Endothelial cell of umbilical vein (primary cell): ENCODE measurements at regions of chr22 and their contacts with region 1.

Region 1: GRCh38 chr22:45336971-45337431 is 27.3 kb downstream of the FAM118A start:
- DNase-seq: peak; percentile 100
- H3K4me3 ChIP-seq: no peak overlapping the region
- H3K27ac ChIP-seq: peak overlapping the region; percentile 96
- H3K4me1 ChIP-seq: peaks cover 22% of the 10 kb centered on the region
- H3K27me3 ChIP-seq: no peaks in the 10 kb centered on the region
- CTCF ChIP-seq: no peak
- POLR2A ChIP-seq: no peak

Region 2: GRCh38 chr22:45268958-45269844 is 67.8 kb before region 1 on chr22:
- CTCF ChIA-PET with region 1: no interaction called
- POLR2A ChIA-PET with region 1: no interaction called
- dilution Hi-C with region 1: no loop called
- intact Hi-C with region 1: loop called (anchors 2 kb)
- DNase-seq: peak; percentile 62
- H3K4me3 ChIP-seq: peak overlapping the region; percentile 44 to 61 (median 57)
- H3K27ac ChIP-seq: no peak overlapping the region
- H3K4me1 ChIP-seq: peaks cover 6% of the 10 kb centered on the region
- H3K27me3 ChIP-seq: peaks cover 4 to 15% of the 10 kb centered on the region in 2 experiments
- CTCF ChIP-seq: peak; percentile 74 to 78
- POLR2A ChIP-seq: no peak

Region 3: DNA sequence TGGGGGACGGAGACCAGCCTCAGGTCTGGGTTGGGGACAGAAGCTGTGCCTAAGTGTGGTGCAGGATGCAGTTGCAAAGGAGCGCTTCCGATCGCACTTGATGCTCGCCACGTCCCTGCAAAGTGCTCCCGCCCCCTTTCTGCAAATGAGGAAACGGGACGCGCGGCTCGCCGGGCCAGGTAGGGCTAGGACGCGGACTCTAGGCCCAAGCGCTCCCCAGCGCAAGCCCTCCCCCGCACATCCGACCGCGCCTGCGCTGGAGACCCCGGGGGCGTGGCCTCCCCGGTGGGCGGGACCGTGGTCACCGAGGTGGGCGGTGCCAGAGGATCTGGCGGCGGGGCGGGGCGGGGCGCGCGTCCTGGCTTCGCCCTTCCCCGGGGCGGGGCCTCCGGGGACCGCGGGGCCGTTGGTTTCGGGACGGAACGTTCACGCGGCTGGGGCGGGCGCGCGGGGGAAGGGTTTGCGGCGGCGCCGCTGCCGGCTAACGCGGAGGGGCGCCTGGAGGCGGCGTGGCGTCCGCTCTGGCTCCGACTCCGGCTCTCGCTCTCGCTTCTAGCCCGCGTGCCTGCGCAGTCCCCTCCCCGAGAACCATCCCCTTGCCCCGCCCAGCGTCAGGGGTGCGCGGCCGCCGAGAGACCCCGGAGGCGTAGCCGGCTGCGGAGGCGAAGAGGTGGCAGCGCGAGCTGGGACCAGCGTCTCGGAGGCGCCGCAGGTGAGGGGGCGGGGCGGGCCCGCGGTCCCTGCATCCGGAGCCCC is 27.4 kb before region 1 on chr22 and contains the start of gene FAM118A:
- CTCF ChIA-PET with region 1: interaction called, 3 read pairs
- POLR2A ChIA-PET with region 1: no interaction called
- dilution Hi-C with region 1: no loop called
- intact Hi-C with region 1: loop called (anchors 1 kb)
- DNase-seq: peak; percentile 91
- H3K4me3 ChIP-seq: peak within 1 kb of the TSS; percentile 74 to 98 (median 97)
- H3K27ac ChIP-seq: peak within 1 kb of the TSS; percentile 66
- H3K4me1 ChIP-seq: peaks cover 24% of the 10 kb centered on the region
- H3K27me3 ChIP-seq: no peaks in the 10 kb centered on the region
- CTCF ChIP-seq: peak in 1 of 2 donors; percentile 17
- POLR2A ChIP-seq: peak; percentile 64
- total RNA-seq, gene FAM118A: 20.2 and 44.2 TPM in 2 replicates

Region 4: GRCh38 chr22:45318168-45318557 is 18.8 kb before region 1 on chr22:
- CTCF ChIA-PET with region 1: interaction called, 22 read pairs
- POLR2A ChIA-PET with region 1: interaction called, 4 read pairs
- dilution Hi-C with region 1: no loop called
- intact Hi-C with region 1: loop called (anchors 1 kb)
- DNase-seq: peak; percentile 97
- H3K4me3 ChIP-seq: peak overlapping the region in 1 of 3 experiments; percentile 44
- H3K27ac ChIP-seq: peak overlapping the region; percentile 99
- H3K4me1 ChIP-seq: peaks cover 33% of the 10 kb centered on the region
- H3K27me3 ChIP-seq: no peaks in the 10 kb centered on the region
- CTCF ChIP-seq: no peak
- POLR2A ChIP-seq: no peak

Region 5: GRCh38 chr22:45413368-45414211 is 76.6 kb after region 1 on chr22 and contains the starts of genes RIBC2 and SMC1B:
- CTCF ChIA-PET with region 1: no interaction called
- POLR2A ChIA-PET with region 1: no interaction called
- dilution Hi-C with region 1: no loop called
- intact Hi-C with region 1: loop called (anchors 2 kb)
- DNase-seq: peak; percentile 76
- H3K4me3 ChIP-seq: peak within 1 kb of the TSS; percentile 32 to 66 (median 49)
- H3K27ac ChIP-seq: peak within 1 kb of the TSS; percentile 56
- H3K4me1 ChIP-seq: peaks cover 2% of the 10 kb centered on the region
- H3K27me3 ChIP-seq: peaks cover 0 to 3% of the 10 kb centered on the region in 2 experiments
- CTCF ChIP-seq: peak in 1 of 2 donors; percentile 1
- POLR2A ChIP-seq: no peak
- total RNA-seq, gene RIBC2: 5.7 TPM in 2 replicates
- total RNA-seq, gene SMC1B: 0.07 TPM in 1 of 2 replicates, not detected in the other